Activated naive CD4-positive, alpha-beta T cell treated with anti-CD3 and anti-CD28 coated beads for 36 hours (primary cell): ENCODE measurements at regions of chr3 and their contacts with region 1.

Region 1: GRCh38 chr3:194203482-194204041 is 67.6 kb downstream of the HES1 start:
- DNase-seq: peak; percentile 62
- H3K4me3 Mint-ChIP-seq: peak overlapping the region; percentile 71
- H3K27ac Mint-ChIP-seq: peak overlapping the region; percentile 57
- H3K4me1 Mint-ChIP-seq: peaks cover 18% of the 10 kb centered on the region
- H3K27me3 Mint-ChIP-seq: peaks cover 14% of the 10 kb centered on the region

Region 2: DNA sequence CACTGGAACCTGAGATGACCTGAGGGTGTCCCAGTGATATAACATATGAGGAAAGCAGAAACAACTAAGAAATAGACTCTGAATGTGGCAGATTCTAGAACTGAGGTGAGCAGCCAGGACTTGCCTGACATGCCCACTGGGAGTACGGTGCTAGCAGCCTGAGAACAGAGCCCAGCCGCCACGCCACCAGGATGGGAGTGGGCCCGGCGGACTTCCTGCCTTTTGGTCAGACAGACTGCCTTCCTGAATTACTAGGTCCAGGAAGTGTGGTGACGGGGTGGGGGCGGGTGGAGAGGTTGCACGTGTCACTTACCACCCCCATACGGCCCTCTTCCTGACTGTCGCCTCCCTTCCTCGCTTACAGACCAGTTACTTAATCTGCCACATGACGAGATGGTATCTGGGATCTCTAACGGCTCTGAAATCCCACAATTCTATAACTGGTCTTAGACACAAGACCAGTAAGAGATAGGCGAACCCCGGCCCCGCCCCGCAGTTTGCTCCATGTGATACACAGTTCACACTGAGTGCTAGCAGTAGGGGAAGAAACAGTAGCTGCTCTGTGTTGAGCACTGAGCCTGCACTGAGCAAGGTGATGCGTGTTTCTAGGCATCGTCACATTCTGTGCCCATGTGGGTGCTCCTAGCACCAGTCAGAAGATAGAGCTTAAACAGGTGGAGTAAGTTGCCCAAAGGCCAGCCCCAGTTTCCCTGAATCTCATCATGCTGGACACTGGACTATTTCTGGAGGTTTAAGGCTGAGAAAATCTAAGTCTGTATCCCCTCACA is 51.9 kb after region 1 on chr3:
- CTCF ChIA-PET with region 1: interaction called, 3 read pairs
- intact Hi-C with region 1: loop called (anchors 2 kb)
- DNase-seq: peak; percentile 78
- H3K4me3 Mint-ChIP-seq: peak overlapping the region; percentile 35
- H3K27ac Mint-ChIP-seq: peak overlapping the region; percentile 56
- H3K4me1 Mint-ChIP-seq: peaks cover 11% of the 10 kb centered on the region
- H3K27me3 Mint-ChIP-seq: no peaks in the 10 kb centered on the region